ENCODE measurements at regions of chr7 and their contacts with region 1.

Region 1: GRCh38 chr7:150340024-150340749 is 1.2 kb downstream of the RARRES2 start:
- DNase-seq: peak; percentile 56
- ATAC-seq: peak; percentile 71
- H3K4me3 ChIP-seq: peak overlapping the region; percentile 75 to 88 (median 86)
- H3K27ac ChIP-seq: peak overlapping the region; percentile 49
- H3K4me1 ChIP-seq: peaks cover 41% of the 10 kb centered on the region
- H3K27me3 ChIP-seq: no peaks in the 10 kb centered on the region; a peak in 1 of 5 replicates
- CTCF ChIP-seq: peak; percentile 17; the same call in 1 of the 2 replicates
- EP300 ChIP-seq: no peak
- POLR2A ChIP-seq: 0 out of 4 replicates have a peak, but pooled peaks of 1 of the 2 experiments have one; percentile 33
- RAD21 ChIP-seq: no peak; the same call in 1 of the 2 replicates

Region 2: GRCh38 chr7:150322833-150323681 is 17.1 kb before region 1 on chr7 and contains the starts of genes ACTR3C and LRRC61:
- CTCF ChIA-PET with region 1: no interaction called
- POLR2A ChIA-PET with region 1: interaction called, 19 read pairs
- in situ Hi-C with region 1: no loop called
- intact Hi-C with region 1: no loop called
- DNase-seq: peak; percentile 74
- ATAC-seq: peak; percentile 82
- H3K4me3 ChIP-seq: peak within 1 kb of the TSS; percentile 74 to 81 (median 77)
- H3K27ac ChIP-seq: peak within 1 kb of the TSS; percentile 84
- H3K4me1 ChIP-seq: peaks cover 54% of the 10 kb centered on the region
- H3K27me3 ChIP-seq: no peaks in the 10 kb centered on the region; a peak in 1 of 5 replicates
- CTCF ChIP-seq: peak; percentile 34; the same call in 1 of the 2 replicates
- EP300 ChIP-seq: peak in 1 of 2 experiments; percentile 35; a peak in 1 of 4 replicates
- POLR2A ChIP-seq: peak; percentile 87 to 94
- RAD21 ChIP-seq: no peak; the same call in none of the 2 replicates
- total RNA-seq, gene ACTR3C: 4.1 and 7.5 TPM in 2 replicates
- total RNA-seq, gene LRRC61: 34.8 and 38.4 TPM in 2 replicates

Region 3: GRCh38 chr7:150368096-150368883 is 28.1 kb after region 1 on chr7 and contains the start of gene REPIN1:
- CTCF ChIA-PET with region 1: no interaction called
- POLR2A ChIA-PET with region 1: interaction called, 40 read pairs
- in situ Hi-C with region 1: no loop called
- intact Hi-C with region 1: loop called (anchors 1 kb)
- DNase-seq: peak; percentile 86
- ATAC-seq: peak; percentile 71
- H3K4me3 ChIP-seq: peak within 1 kb of the TSS; percentile 68 to 84 (median 82)
- H3K27ac ChIP-seq: peak within 1 kb of the TSS; percentile 100
- H3K4me1 ChIP-seq: peaks cover 35% of the 10 kb centered on the region
- H3K27me3 ChIP-seq: no peaks in the 10 kb centered on the region
- CTCF ChIP-seq: peak; percentile 26; the same call in 1 of the 2 replicates
- EP300 ChIP-seq: peak; percentile 43 to 49; a peak in 2 of 4 replicates
- POLR2A ChIP-seq: peak; percentile 50 to 72; a peak in 3 of 4 replicates
- RAD21 ChIP-seq: 0 out of 2 replicates have a peak, but pooled peaks have one; percentile 54
- total RNA-seq, gene REPIN1: 86.4 and 108 TPM in 2 replicates

Region 4: DNA sequence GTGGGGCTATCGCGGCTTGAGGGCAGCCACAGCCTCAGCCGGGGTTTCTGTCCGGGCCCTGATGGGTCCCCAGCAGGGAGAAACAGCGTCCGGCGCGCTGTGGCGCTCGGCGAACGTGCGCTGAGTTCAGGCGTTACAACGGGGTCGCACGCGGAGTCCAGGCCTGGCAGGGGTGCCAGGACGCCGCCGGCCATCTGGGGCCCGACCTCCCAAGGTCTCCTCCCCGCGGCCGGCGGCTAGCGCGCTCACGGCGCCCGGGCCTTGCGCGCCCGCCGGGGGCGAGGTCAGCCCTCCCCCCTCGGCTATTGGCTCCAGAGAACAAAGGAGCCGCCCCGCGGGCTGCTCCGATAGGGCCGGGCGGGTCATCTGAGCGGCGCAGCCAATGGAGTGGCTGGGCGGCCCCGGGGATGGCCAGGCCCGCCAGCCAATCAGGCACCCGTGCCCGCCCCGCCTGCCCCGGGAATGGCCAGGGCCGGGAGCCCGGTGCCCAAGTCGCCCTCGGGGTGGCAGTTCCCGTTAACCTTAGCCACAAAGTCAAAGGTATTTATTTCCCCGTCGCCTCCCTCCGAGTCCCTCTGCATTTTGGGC is 38.8 kb after region 1 on chr7 and contains the start of gene ZNF775:
- CTCF ChIA-PET with region 1: no interaction called
- POLR2A ChIA-PET with region 1: interaction called, 12 read pairs
- in situ Hi-C with region 1: no loop called
- intact Hi-C with region 1: no loop called
- DNase-seq: peak; percentile 90
- ATAC-seq: peak; percentile 83
- H3K4me3 ChIP-seq: peak within 1 kb of the TSS; percentile 88 to 92 (median 92)
- H3K27ac ChIP-seq: peak within 1 kb of the TSS; percentile 97
- H3K4me1 ChIP-seq: peaks cover 84% of the 10 kb centered on the region
- H3K27me3 ChIP-seq: no peaks in the 10 kb centered on the region
- CTCF ChIP-seq: peak; percentile 20
- EP300 ChIP-seq: no peak
- POLR2A ChIP-seq: peak; percentile 85 to 93
- RAD21 ChIP-seq: peak; percentile 45
- total RNA-seq, gene ZNF775: 3.1 and 4.5 TPM in 2 replicates

Region 5: DNA sequence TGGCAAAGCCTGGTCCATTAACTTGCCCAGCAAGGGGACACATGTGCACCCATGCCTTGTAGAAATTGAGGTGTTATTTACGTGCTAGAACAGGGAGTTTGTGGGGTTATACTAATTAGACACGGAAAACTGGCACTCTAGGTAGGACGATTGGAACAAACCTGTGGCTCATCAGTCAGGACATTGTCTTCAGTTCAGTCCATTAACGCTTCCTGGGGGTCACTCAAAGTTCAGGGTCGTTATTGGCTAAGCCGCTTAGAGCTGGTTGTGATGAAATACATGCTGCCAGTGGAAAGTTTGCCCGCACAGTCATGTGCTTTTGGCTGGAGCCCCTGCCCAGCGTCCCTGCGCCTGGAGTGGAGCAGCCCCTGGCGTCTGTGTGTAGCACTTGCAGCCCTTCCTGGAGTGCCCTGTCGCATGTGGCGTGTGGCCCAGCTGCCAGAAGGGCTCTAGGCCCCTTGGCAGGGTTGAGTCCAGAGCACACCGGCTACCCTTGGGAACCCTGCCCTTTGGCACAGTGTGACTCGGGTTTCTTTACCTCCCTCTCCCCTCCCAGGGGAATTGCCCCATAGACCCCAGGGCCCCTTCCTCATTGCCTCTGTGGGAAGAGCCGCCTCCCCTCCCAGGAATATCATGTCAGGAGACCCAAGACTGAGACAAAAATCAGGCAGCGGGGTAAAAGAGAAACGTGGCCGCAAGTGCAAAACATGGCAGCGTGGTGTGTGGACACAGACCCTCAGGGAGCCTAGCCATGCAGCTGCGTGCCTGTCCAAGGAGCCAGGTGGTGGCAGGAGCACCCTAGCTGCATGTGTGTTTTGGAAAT is 48.7 kb after region 1 on chr7:
- CTCF ChIA-PET with region 1: no interaction called
- POLR2A ChIA-PET with region 1: interaction called, 12 read pairs
- in situ Hi-C with region 1: no loop called
- intact Hi-C with region 1: loop called (anchors 5 kb)
- DNase-seq: peak; percentile 98
- ATAC-seq: peak; percentile 93
- H3K4me3 ChIP-seq: no peak overlapping the region
- H3K27ac ChIP-seq: peak overlapping the region; percentile 86
- H3K4me1 ChIP-seq: peaks cover 55% of the 10 kb centered on the region
- H3K27me3 ChIP-seq: no peaks in the 10 kb centered on the region
- CTCF ChIP-seq: peak; percentile 100
- EP300 ChIP-seq: peak; percentile 94 to 95
- POLR2A ChIP-seq: peak in 1 of 2 experiments; percentile 35; a peak in 1 of 4 replicates
- RAD21 ChIP-seq: peak; percentile 100

Region 6: DNA sequence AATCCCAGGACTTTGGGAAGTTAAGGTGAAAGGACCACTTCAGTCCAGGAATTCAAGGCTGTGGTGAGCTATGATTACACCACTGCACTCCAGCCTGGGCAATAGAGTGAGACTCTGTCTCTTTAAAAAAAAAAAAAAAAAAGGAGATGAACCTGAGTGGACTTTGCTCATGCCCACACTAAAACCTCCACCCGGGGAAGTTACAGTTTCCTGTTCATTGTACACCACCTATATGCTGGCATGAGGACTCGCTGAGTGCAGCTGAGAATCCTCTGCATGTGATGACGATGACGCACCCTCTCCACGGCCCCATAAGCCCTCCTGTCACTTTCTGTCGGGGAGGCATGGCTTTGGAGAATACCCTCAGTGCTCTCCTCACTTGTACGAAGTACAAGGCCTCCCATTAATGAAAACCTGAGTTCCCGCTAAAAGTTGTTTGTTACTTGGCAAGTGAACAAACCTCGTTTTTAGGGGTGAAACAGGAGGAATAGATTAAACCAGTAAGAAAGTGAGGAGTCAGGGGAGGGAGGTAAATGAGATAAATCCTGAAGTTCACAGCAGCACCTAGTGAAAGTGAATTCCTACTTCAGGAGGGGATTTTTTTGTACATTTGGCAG is 444.0 kb after region 1 on chr7:
- CTCF ChIA-PET with region 1: no interaction called
- POLR2A ChIA-PET with region 1: no interaction called
- in situ Hi-C with region 1: no loop called
- intact Hi-C with region 1: loop called (anchors 2 kb)
- DNase-seq: peak; percentile 50
- ATAC-seq: peak; percentile 85
- H3K4me3 ChIP-seq: no peak overlapping the region
- H3K27ac ChIP-seq: no peak overlapping the region
- H3K4me1 ChIP-seq: peaks cover 18% of the 10 kb centered on the region
- H3K27me3 ChIP-seq: peaks cover 0 to 16% of the 10 kb centered on the region in 2 experiments; a peak in 3 of 5 replicates
- CTCF ChIP-seq: 0 out of 2 replicates have a peak, but pooled peaks have one; percentile 4
- EP300 ChIP-seq: no peak
- POLR2A ChIP-seq: 0 out of 4 replicates have a peak, but pooled peaks of 1 of the 2 experiments have one; percentile 25
- RAD21 ChIP-seq: no peak

Measured in HepG2 (cell line).